ENCODE measurements at regions of chr7 and their contacts with region 1.

Region 1: DNA sequence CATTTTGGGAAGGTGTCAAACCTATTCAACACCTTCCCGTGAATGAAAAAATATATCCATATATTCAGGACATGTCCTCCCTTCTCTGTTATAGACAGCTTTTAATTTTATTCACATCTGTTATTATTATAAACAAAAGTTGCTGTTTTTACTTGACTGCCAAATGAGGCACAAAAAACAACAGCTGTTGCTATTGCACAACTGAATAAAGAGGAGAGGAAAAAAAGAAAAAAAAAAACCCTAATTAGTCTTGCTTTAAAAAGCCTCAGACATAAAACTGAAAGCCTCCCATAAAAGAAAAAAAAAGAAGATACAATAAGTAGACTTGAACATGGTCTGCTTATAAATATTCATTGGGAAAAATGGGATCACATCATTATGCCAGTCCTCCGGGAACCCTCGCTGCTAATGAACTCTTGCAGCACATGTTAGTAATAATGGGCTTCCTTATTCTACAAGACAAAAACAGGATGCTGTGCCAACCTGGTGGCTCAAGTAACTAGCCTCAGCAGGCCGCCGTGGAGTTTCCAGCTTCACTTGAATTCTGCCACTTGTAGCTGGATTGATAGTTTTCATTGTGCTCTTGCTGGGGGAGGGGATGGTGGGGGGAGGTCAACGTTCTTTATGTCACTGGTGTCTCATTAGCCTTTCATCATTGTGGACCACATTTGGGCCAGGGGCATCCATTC is 153.6 kb downstream of the BMPER start:
- DNase-seq: no peak
- ATAC-seq: no peak
- H3K4me3 ChIP-seq: no peak overlapping the region
- H3K27ac ChIP-seq: no peak overlapping the region
- H3K4me1 ChIP-seq: peaks cover 5% of the 10 kb centered on the region; the same call in 1 of the 2 replicates
- H3K27me3 ChIP-seq: peaks cover 6% of the 10 kb centered on the region; the same call in 1 of the 2 replicates
- CTCF ChIP-seq: no peak

Region 2: DNA sequence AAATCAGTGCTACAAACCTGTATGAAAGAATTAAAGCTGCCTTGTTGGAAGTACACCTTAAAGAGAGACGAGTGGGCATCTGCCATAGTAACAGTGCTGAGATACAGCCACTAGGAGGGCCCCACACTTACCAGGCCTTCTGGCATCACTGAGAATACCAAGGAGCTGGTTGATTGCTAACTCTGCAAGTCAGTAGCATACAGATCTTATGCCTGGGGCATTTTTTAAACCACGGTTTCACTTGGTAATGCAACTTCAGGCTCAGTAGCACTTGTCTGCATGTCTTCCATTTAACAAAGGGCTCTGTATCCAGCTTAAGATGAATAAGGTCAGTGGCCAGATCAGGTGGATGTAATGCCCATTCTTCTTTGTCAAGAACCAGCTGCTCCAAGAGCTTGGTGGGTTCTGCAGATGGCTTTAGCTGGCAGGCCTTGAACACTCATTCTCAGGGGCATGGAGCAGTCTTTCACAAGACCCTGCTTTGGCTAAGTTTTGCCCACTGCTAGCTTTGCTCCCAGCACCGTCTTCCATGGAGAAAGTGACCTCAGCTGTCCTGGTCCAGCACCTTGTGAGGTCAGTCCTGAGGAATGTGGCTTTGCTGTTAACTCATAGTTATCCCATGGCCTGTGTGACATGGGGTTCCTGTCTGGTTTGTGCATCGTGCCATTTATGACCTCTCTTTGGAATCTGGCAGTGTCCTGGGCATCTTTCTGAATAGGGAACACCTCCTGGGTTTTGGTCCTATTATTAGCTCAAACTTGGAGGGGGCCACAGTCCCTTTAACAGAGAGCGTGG is 85.5 kb before region 1 on chr7:
- CTCF ChIA-PET with region 1: interaction called, 10 read pairs
- POLR2A ChIA-PET with region 1: no interaction called
- intact Hi-C with region 1: no loop called
- DNase-seq: no peak
- ATAC-seq: no peak
- H3K4me3 ChIP-seq: no peak overlapping the region
- H3K27ac ChIP-seq: no peak overlapping the region
- H3K4me1 ChIP-seq: no peaks in the 10 kb centered on the region
- H3K27me3 ChIP-seq: 0 out of 2 replicates have a peak, but pooled peaks cover 5% of the 10 kb centered on the region
- CTCF ChIP-seq: no peak

Region 3: GRCh38 chr7:33986941-33987588 is 71.9 kb before region 1 on chr7:
- CTCF ChIA-PET with region 1: no interaction called
- POLR2A ChIA-PET with region 1: no interaction called
- intact Hi-C with region 1: loop called (anchors 10 kb)
- DNase-seq: peak; percentile 96
- ATAC-seq: peak; percentile 100
- H3K4me3 ChIP-seq: no peak overlapping the region
- H3K27ac ChIP-seq: peak overlapping the region; percentile 51
- H3K4me1 ChIP-seq: peaks cover 18% of the 10 kb centered on the region
- H3K27me3 ChIP-seq: no peaks in the 10 kb centered on the region
- CTCF ChIP-seq: no peak

Region 4: GRCh38 chr7:34662058-34662708 is 603.2 kb after region 1 on chr7:
- CTCF ChIA-PET with region 1: no interaction called
- POLR2A ChIA-PET with region 1: no interaction called
- intact Hi-C with region 1: no loop called
- DNase-seq: no peak
- ATAC-seq: no peak
- H3K4me3 ChIP-seq: no peak overlapping the region
- H3K27ac ChIP-seq: no peak overlapping the region
- H3K4me1 ChIP-seq: no peaks in the 10 kb centered on the region
- H3K27me3 ChIP-seq: peaks cover 46% of the 10 kb centered on the region
- CTCF ChIP-seq: no peak

Measured in PC-3 (cell line).